T-cell (primary cell): ENCODE measurements at regions of chr12 and their contacts with region 1.

Region 1: GRCh38 chr12:69639400-69640016 is 28.8 kb upstream of the LRRC10 start:
- DNase-seq: peak; percentile 7 to 73 (median 44)
- ATAC-seq: peak; percentile 63 to 71 (median 66)
- H3K4me3 ChIP-seq: no peak overlapping the region
- H3K4me3 Mint-ChIP-seq: no peak overlapping the region
- H3K27ac ChIP-seq: no peak overlapping the region
- H3K27ac Mint-ChIP-seq: no peak overlapping the region
- H3K4me1 ChIP-seq: no peaks in the 10 kb centered on the region
- H3K4me1 Mint-ChIP-seq: peaks cover 0 to 2% (median 2%) of the 10 kb centered on the region in 3 donors
- H3K27me3 ChIP-seq: peaks cover 0 to 3% of the 10 kb centered on the region in 2 experiments
- H3K27me3 Mint-ChIP-seq: peaks cover 0 to 2% of the 10 kb centered on the region in 2 donors

Region 2: DNA sequence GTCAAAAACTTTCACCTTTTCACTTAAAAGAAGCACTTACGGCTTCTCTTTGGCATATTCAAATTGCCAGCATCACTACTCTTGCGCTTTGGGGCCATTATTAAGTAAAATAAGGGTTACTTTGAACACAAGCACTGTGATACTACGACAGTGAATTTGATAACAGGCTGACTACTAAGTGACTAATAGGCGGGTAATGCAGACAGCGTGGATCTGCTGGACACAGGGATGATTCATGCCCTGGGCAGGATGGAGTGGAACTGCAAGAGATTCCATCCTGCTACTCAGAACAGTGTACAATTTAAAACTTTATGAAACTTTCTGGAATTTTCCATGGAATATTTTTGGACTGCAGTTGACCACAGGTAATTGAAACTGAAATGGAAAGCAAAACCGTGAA is 234.0 kb before region 1 on chr12:
- CTCF ChIA-PET with region 1: interaction called in 1 of 2 experiments, 10 read pairs
- POLR2A ChIA-PET with region 1: no interaction called
- DNase-seq: no peak
- ATAC-seq: no peak
- H3K4me3 ChIP-seq: no peak overlapping the region
- H3K4me3 Mint-ChIP-seq: no peak overlapping the region
- H3K27ac ChIP-seq: no peak overlapping the region
- H3K27ac Mint-ChIP-seq: no peak overlapping the region
- H3K4me1 ChIP-seq: no peaks in the 10 kb centered on the region
- H3K4me1 Mint-ChIP-seq: no peaks in the 10 kb centered on the region
- H3K27me3 ChIP-seq: no peaks in the 10 kb centered on the region
- H3K27me3 Mint-ChIP-seq: no peaks in the 10 kb centered on the region

Region 3: DNA sequence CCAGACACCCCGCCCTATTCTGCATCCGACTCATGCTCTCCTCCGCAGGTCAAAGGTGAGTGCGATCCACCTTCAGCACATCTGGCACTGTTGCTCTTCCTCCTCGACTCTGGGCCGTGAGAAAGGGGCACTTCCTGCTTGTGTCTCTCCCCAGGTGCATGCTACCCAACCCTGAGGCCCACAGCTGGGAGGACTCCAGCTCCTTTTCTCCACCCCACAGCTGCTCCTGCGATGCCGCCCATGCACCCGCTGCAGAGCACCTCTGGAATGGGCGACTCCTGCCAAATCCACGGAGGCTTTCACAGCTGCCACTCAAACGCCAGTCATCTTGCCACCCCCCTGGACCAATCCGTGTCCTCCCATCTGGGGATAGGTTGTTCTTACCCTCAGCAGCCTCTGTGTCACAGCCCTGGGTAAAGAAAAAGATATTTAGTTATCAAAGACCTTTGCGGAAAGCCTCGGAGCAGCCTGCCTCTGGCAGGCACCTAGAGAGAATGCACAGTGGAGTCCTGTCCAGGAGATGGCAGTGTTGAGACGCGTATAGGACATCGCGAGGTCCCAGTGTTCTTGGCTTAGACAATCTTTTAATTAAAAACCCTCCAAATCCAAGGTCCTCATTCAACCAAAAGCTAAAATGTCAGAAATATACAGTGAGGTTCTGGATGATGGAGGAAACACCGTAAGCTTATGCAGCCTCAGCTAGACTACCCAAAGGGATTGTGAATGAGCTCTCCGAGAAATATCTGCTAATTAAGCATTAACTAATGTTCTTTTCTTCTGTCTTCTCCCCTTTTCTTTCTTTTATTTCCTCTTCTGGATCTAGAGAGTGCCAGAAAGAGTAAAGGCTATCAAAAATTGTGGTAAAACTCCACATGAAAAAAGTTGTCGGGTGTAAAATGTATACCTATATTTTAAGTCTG is 239.8 kb after region 1 on chr12:
- CTCF ChIA-PET with region 1: no interaction called
- POLR2A ChIA-PET with region 1: no interaction called
- DNase-seq: peak; percentile 5 to 78 (median 48)
- ATAC-seq: peak; percentile 74 to 81 (median 77)
- H3K4me3 ChIP-seq: no peak overlapping the region
- H3K4me3 Mint-ChIP-seq: peak overlapping the region in 1 of 3 donors; percentile 31
- H3K27ac ChIP-seq: no peak overlapping the region
- H3K27ac Mint-ChIP-seq: no peak overlapping the region
- H3K4me1 ChIP-seq: peaks cover 0 to 5% of the 10 kb centered on the region in 2 experiments
- H3K4me1 Mint-ChIP-seq: peaks cover 4 to 6% (median 5%) of the 10 kb centered on the region in 3 donors
- H3K27me3 ChIP-seq: peaks cover 0 to 11% of the 10 kb centered on the region in 2 experiments
- H3K27me3 Mint-ChIP-seq: peaks cover 6 to 20% of the 10 kb centered on the region in 2 donors